Colonic mucosa (tissue), 4 donors: ENCODE measurements at regions of chr11 and their contacts with region 1.

Region 1: GRCh38 chr11:9527481-9528140 is 45.9 kb upstream of the WEE1 start:
- DNase-seq: peak; percentile 42
- H3K4me3 ChIP-seq: no peak overlapping the region
- H3K27ac ChIP-seq: peak overlapping the region; percentile 80
- H3K4me1 ChIP-seq: peaks cover 5% of the 10 kb centered on the region
- H3K27me3 ChIP-seq: no peaks in the 10 kb centered on the region
- CTCF ChIP-seq: no peak

Region 2: DNA sequence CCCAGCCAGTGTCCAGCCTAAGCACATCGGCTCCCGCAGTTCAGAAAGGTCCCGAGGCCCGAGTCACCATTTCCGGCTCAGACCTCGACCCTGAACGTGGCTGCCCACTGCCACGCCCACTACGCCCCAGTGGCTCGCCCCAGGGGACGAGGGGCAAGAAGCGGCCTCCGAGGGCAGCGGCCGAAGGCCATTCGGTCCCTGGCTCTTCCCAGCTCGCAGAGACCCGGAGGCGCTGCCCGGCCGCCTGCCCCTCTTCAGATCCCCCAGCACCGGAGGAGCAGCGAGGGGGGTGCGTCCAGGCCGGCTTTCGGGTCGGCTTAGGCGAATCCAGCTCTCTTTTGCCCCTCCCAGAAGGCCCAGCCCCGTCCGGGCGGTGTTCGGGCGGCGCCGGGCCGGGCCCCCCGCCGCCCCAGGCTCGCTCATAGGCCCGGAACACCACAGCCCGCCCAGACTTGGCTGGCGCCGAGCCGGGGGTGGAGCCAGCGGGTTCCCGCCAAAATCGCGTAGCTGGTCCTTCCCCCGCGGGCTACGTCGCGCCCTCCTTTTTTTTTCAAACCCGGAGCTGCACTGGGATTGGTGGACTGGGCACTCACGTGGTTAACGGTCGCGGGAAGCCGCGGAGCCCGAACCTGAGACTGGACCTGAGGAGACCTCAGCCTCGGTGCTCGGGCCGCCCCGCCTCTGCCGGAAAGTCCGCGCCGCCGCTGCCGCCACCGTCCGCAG is 45.6 kb after region 1 on chr11 and contains the start of gene WEE1:
- intact Hi-C with region 1: loop called (anchors 10 kb)
- DNase-seq: peak; percentile 99
- H3K4me3 ChIP-seq: peak within 1 kb of the TSS; percentile 72
- H3K27ac ChIP-seq: peak within 1 kb of the TSS; percentile 94
- H3K4me1 ChIP-seq: peaks cover 4% of the 10 kb centered on the region
- H3K27me3 ChIP-seq: no peaks in the 10 kb centered on the region
- CTCF ChIP-seq: no peak
- total RNA-seq, gene WEE1: 27.8 to 37.9 TPM